ENCODE measurements at regions of chr10 and their contacts with region 1.

Region 1: DNA sequence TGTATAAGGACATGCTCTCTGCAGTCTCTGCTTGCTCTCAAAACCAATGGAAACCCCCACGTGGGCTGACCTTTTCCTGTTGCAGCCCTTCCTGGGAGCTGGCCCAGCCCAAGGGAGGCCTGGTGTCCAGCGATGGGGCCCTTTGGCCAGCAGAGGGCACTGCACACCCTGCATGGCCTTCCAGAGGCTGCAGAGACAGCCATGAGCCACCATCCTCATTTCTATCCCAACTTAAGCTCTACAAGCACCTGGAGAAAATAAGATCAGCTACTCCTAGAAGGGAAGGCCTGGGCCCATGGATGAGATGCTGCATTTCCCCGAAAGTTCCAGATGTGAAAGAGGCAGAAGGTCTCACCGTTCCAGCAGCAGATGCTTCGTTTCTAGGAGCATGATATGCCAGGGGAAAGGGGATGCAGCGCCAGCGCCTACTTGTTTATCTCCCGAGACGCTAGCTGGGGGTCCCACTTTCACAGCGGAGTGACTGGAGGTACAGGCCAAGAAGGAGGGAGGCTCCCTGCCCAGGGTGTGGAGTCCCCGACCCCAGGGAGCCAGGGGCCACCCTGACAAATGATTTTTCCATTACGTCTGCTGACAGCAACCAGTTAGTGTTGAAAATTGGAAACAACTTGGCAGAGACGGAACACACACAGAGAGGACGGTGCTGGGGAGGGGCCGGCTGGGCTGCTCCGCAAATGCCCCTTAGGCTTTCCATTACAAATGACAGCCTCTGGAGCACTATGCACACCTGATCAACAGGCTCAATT is 106.4 kb downstream of the ZRANB1 start:
- DNase-seq: peak; percentile 92
- ATAC-seq: peak; percentile 87

Region 2: GRCh38 chr10:125011888-125012705 is 36.2 kb before region 1 on chr10:
- intact Hi-C with region 1: loop called (anchors 5 kb)
- DNase-seq: no peak
- ATAC-seq: no peak

Region 3: DNA sequence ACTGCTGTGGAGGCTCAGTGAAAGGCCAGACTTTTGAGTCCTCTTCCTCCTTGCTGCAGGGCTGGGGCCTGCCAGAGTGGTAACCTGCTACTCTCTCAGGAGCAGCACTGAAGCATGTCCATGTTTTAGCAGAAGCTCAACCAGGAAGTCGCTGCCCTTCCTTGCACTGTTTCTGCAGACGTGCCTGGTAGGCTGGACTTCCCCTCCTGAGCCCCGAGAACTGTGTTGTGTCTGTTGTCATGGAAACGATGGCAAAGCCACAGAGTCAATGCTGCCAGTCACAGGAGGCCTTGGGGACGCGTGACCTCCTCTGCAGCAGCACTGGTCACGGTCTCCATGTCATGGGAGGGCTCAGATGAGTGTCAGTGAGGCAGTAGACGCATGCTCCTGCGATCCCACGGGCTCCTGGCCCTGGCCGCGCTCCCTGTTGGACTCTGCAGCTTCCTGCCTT is 993.5 kb after region 1 on chr10:
- intact Hi-C with region 1: no loop called
- DNase-seq: peak; percentile 91
- ATAC-seq: peak; percentile 97